HCT116 (cell line): ENCODE measurements at regions of chr9 and their contacts with region 1.

Region 1: GRCh38 chr9:132185073-132186012 is 23.5 kb downstream of the NTNG2 start:
- DNase-seq: no peak
- ATAC-seq: peak; percentile 53
- H3K4me3 ChIP-seq: no peak overlapping the region
- H3K27ac ChIP-seq: no peak overlapping the region
- H3K4me1 ChIP-seq: no peaks in the 10 kb centered on the region
- H3K27me3 ChIP-seq: peaks cover 4% of the 10 kb centered on the region; the same call in 1 of the 2 replicates
- CTCF ChIP-seq: no peak
- POLR2A ChIP-seq: no peak
- RAD21 ChIP-seq: no peak

Region 2: GRCh38 chr9:132169672-132170392 is 15.5 kb before region 1 on chr9:
- CTCF ChIA-PET with region 1: interaction called, 10 read pairs
- POLR2A ChIA-PET with region 1: interaction called, 3 read pairs
- RAD21 ChIA-PET with region 1: no interaction called
- intact Hi-C with region 1: no loop called
- DNase-seq: peak; percentile 29
- ATAC-seq: peak; percentile 80
- H3K4me3 ChIP-seq: no peak overlapping the region
- H3K27ac ChIP-seq: no peak overlapping the region
- H3K4me1 ChIP-seq: no peaks in the 10 kb centered on the region
- H3K27me3 ChIP-seq: no peaks in the 10 kb centered on the region
- CTCF ChIP-seq: peak; percentile 75 to 94 (median 94); a peak in 5 of 6 replicates
- POLR2A ChIP-seq: no peak
- RAD21 ChIP-seq: peak; percentile 73